ENCODE measurements at regions of chr10 and their contacts with region 1.

Region 1: DNA sequence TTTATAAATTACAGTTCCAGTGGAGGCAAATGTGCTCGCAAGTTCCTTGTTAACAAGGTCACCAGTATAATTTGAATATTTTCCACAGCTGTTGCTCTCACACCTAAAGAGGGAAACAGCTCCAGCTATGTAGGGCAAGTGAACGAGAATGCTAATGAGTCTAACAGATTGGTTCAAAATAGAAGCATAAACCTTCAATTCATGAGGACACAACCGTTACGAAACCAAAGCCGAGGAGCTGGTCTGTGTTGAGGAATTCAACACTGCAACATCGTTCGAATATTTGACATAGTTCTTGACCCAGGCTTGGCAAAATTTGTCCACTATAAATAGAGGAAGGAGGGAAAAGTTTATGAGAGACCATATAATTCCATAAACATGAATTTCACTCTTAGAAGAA is 161.3 kb downstream of the KLF6 start:
- DNase-seq: no peak
- ATAC-seq: no peak
- H3K4me3 ChIP-seq: no peak overlapping the region
- H3K27ac ChIP-seq: no peak overlapping the region
- H3K4me1 ChIP-seq: 0 out of 2 replicates have a peak, but pooled peaks cover 7% of the 10 kb centered on the region
- H3K27me3 ChIP-seq: no peaks in the 10 kb centered on the region
- CTCF ChIP-seq: no peak

Region 2: GRCh38 chr10:3640816-3641215 is 17.1 kb after region 1 on chr10:
- CTCF ChIA-PET with region 1: no interaction called
- POLR2A ChIA-PET with region 1: interaction called, 10 read pairs
- intact Hi-C with region 1: no loop called
- DNase-seq: no peak
- ATAC-seq: no peak
- H3K4me3 ChIP-seq: no peak overlapping the region
- H3K27ac ChIP-seq: no peak overlapping the region
- H3K4me1 ChIP-seq: no peaks in the 10 kb centered on the region; the same call in 1 of the 2 replicates
- H3K27me3 ChIP-seq: no peaks in the 10 kb centered on the region
- CTCF ChIP-seq: no peak

Region 3: DNA sequence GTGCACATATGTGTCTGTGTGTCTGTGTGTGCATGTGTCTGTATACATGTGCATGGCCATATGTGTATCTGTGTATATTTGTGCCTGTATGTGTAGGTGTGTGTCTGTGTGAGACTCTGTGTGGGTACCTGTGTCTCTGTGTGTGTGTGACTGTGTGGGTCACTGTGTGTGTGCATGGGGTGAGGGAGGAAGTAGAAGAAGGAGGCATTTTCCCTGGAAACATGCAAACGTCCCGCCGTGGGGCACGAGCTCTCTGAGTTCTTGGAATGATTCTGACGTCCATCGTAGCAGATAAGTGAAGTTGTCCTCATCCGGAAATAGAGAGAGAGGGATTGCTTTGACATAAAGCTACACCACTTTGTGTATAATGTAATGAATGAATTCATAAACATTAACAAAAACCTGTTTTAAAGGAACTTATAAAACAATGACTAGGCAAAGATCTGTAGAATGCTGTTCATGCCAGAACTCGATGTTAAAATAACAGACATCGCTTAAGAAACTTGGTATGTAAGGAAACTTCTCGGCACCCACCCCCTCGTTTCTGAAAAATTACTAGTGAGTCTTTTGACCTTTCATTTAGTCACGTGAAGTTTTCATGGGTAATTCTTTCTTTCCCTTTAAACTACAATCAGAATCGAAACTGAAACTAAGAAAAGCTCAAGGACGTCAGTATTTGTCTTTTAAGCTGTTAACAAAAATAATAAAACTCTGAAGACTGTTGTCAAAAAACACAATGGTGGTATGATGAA is 204.8 kb after region 1 on chr10:
- CTCF ChIA-PET with region 1: no interaction called
- POLR2A ChIA-PET with region 1: no interaction called
- intact Hi-C with region 1: no loop called
- DNase-seq: peak; percentile 31
- ATAC-seq: peak; percentile 20; the same call in 1 of the 2 replicates
- H3K4me3 ChIP-seq: peak overlapping the region; percentile 71
- H3K27ac ChIP-seq: peak overlapping the region; percentile 37
- H3K4me1 ChIP-seq: peaks cover 13% of the 10 kb centered on the region; the same call in 1 of the 2 replicates
- H3K27me3 ChIP-seq: no peaks in the 10 kb centered on the region
- CTCF ChIP-seq: no peak

Region 4: GRCh38 chr10:4234661-4235060 is 610.9 kb after region 1 on chr10:
- CTCF ChIA-PET with region 1: no interaction called
- POLR2A ChIA-PET with region 1: no interaction called
- intact Hi-C with region 1: no loop called
- DNase-seq: no peak
- ATAC-seq: no peak
- H3K4me3 ChIP-seq: no peak overlapping the region
- H3K27ac ChIP-seq: no peak overlapping the region
- H3K4me1 ChIP-seq: no peaks in the 10 kb centered on the region
- H3K27me3 ChIP-seq: no peaks in the 10 kb centered on the region
- CTCF ChIP-seq: no peak

Measured in PC-3 (cell line).